Tibial artery (tissue), 4 donors: ENCODE measurements at regions of chr1 and their contacts with region 1.

Region 1: GRCh38 chr1:43348809-43349583 is 9.8 kb upstream of the CDC20 start:
- DNase-seq: peak; percentile 65 to 89
- H3K4me3 ChIP-seq: peak overlapping the region; percentile 59 to 82
- H3K27ac ChIP-seq: peak overlapping the region; percentile 86 to 93
- H3K4me1 ChIP-seq: peaks cover 0 to 19% (median 10%) of the 10 kb centered on the region in 4 donors
- H3K27me3 ChIP-seq: no peaks in the 10 kb centered on the region
- CTCF ChIP-seq: no peak

Region 2: GRCh38 chr1:42924082-42924850 is 424.7 kb before region 1 on chr1:
- intact Hi-C with region 1: loop called (anchors 10 kb)
- DNase-seq: peak; percentile 96 to 98
- H3K4me3 ChIP-seq: peak overlapping the region; percentile 67 to 81
- H3K27ac ChIP-seq: peak overlapping the region; percentile 96 to 98
- H3K4me1 ChIP-seq: peaks cover 0 to 19% (median 6%) of the 10 kb centered on the region in 4 donors
- H3K27me3 ChIP-seq: no peaks in the 10 kb centered on the region
- CTCF ChIP-seq: peak in 1 of 2 experiments; percentile 17

Region 3: DNA sequence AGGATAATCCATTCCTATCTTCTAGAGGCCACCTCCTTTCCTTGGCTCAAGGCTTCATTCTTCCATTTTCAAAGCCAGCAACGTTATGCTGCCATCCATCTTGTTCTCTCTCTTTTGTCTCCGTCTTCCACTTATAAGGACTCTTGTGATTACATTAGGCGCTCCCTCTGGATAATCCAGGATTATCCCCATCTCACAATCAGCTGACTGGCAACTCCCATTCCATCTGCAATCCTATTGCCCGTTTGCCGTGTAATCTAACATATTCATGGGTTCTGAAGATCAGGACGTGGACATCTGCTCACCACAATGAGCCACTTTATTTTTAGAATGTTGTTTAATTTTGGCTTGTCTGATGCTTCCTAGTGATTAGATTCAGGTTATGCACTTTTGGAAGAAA is 266.3 kb before region 1 on chr1:
- intact Hi-C with region 1: no loop called
- DNase-seq: no peak
- H3K4me3 ChIP-seq: no peak overlapping the region
- H3K27ac ChIP-seq: no peak overlapping the region
- H3K4me1 ChIP-seq: no peaks in the 10 kb centered on the region
- H3K27me3 ChIP-seq: peaks cover 0 to 15% of the 10 kb centered on the region in 2 donors
- CTCF ChIP-seq: no peak

Region 4: GRCh38 chr1:43389326-43390313 is 40.6 kb after region 1 on chr1 and contains the starts of genes MED8 and SZT2:
- intact Hi-C with region 1: loop called (anchors 5 kb)
- DNase-seq: peak; percentile 97 to 98
- H3K4me3 ChIP-seq: peak within 1 kb of the TSS; percentile 76 to 78
- H3K27ac ChIP-seq: peak within 1 kb of the TSS; percentile 87
- H3K4me1 ChIP-seq: peaks cover 0 to 33% (median 26%) of the 10 kb centered on the region in 4 donors
- H3K27me3 ChIP-seq: no peaks in the 10 kb centered on the region
- CTCF ChIP-seq: no peak